Ascending aorta (tissue), 2 donors: ENCODE measurements at regions of chr17 and their contacts with region 1.

Region 1: DNA sequence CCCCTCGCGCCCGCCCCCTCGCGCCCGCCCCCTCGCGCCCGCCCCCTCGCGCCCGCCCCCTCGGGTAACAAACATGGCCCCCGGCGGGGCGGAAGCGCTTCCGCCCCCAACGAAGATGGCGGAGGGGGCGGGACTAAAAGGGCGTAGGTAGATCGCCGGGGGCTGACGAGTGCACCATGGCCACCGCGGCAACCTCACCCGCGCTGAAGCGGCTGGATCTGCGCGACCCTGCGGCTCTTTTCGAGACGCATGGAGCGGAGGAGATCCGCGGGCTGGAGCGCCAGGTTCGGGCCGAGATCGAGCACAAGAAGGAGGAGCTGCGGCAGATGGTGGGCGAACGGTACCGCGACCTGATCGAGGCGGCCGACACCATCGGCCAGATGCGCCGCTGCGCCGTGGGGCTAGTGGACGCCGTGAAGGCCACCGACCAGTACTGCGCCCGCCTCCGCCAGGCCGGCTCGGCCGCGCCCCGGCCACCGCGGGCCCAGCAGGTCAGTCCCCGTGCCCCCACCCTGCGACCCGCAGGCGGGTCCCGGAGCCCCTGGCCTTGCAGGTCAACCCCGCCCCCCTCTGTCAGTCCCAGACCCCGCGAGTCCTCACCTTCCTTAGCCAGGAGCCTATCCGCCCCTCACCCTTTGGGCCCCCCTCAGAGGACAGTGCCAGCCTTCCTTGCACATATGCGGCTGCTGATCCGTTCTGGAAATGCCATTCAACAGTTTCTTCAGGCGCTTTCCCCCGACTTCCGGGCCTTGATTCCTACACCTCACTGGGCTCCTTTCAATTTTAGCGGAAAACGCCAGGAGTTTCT is at the start of gene COG1:
- DNase-seq: peak; percentile 29 to 92
- H3K4me3 ChIP-seq: peak within 1 kb of the TSS; percentile 91 to 93
- H3K27ac ChIP-seq: peak within 1 kb of the TSS; percentile 91 to 92
- H3K4me1 ChIP-seq: peaks cover 4 to 6% of the 10 kb centered on the region in 2 donors
- H3K27me3 ChIP-seq: no peaks in the 10 kb centered on the region
- CTCF ChIP-seq: no peak
- total RNA-seq, gene COG1: 35.9 TPM

Region 2: GRCh38 chr17:71976011-71976649 is 1217.0 kb before region 1 on chr17:
- intact Hi-C with region 1: loop called (anchors 10 kb)
- DNase-seq: peak; percentile 76 to 95
- H3K4me3 ChIP-seq: peak overlapping the region in 1 of 2 donors; percentile 68
- H3K27ac ChIP-seq: peak overlapping the region; percentile 41 to 80
- H3K4me1 ChIP-seq: peaks cover 3 to 5% of the 10 kb centered on the region in 2 donors
- H3K27me3 ChIP-seq: no peaks in the 10 kb centered on the region
- CTCF ChIP-seq: no peak

Region 3: DNA sequence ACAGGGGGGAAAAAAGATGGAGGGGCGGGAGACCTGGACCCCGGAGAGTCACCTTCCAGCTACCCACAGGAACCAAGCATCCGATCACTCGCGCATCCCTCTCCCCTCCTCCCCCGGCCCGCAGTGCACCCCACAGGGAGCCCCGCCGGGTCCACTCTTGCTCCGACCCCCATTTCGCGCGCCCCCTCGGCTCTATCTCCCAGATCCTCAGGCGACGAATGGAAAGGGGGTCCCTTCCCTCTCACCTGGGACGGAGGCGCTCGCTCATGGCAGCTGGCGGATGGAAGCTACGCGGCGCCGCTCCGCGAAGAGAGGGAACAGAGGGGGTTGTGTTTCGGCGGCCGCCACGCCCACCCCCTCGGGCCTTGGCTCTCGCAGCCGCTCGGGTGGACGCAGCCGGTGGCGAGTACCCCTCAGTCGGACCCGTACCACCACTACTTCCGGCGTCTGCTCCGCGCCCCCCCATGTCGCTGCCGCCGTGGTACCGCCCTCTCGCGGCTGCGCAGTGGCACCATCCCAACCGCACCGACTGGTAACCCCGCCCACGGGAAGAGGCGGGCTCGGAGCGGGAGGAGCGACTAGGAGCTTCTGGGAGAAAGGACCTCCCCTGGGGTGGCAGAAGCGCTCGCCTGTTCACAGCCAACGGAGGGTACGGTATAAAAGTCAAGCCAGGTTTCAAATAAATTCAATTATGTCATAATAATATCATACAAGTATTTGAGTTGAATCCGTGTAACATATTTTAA is 38.9 kb after region 1 on chr17:
- intact Hi-C with region 1: loop called (anchors 1 kb)
- DNase-seq: peak; percentile 83 to 97
- H3K4me3 ChIP-seq: peak overlapping the region; percentile 87 to 96
- H3K27ac ChIP-seq: peak overlapping the region; percentile 83 to 85
- H3K4me1 ChIP-seq: peaks cover 5 to 27% of the 10 kb centered on the region in 2 donors
- H3K27me3 ChIP-seq: no peaks in the 10 kb centered on the region
- CTCF ChIP-seq: peak; percentile 27 to 39 (median 31)

Region 4: GRCh38 chr17:73311781-73312641 is 118.9 kb after region 1 on chr17 and contains the start of gene CDC42EP4:
- intact Hi-C with region 1: loop called (anchors 1 kb)
- DNase-seq: peak; percentile 83 to 98
- H3K4me3 ChIP-seq: peak within 1 kb of the TSS; percentile 94 to 100
- H3K27ac ChIP-seq: peak within 1 kb of the TSS; percentile 99
- H3K4me1 ChIP-seq: peaks cover 16 to 35% of the 10 kb centered on the region in 2 donors
- H3K27me3 ChIP-seq: no peaks in the 10 kb centered on the region
- CTCF ChIP-seq: no peak
- total RNA-seq, gene CDC42EP4: 104 TPM

Region 5: GRCh38 chr17:74212913-74213791 is 1020.1 kb after region 1 on chr17 and contains the start of gene TTYH2:
- intact Hi-C with region 1: loop called (anchors 5 kb)
- DNase-seq: peak; percentile 73 to 93
- H3K4me3 ChIP-seq: peak within 1 kb of the TSS; percentile 60 to 75
- H3K27ac ChIP-seq: peak within 1 kb of the TSS; percentile 68 to 81
- H3K4me1 ChIP-seq: peaks cover 23 to 34% of the 10 kb centered on the region in 2 donors
- H3K27me3 ChIP-seq: no peaks in the 10 kb centered on the region
- CTCF ChIP-seq: peak in 2 of 3 experiments; percentile 9 to 33
- total RNA-seq, gene TTYH2: 30.3 TPM